ENCODE measurements at regions of chr22 and their contacts with region 1.

Region 1: DNA sequence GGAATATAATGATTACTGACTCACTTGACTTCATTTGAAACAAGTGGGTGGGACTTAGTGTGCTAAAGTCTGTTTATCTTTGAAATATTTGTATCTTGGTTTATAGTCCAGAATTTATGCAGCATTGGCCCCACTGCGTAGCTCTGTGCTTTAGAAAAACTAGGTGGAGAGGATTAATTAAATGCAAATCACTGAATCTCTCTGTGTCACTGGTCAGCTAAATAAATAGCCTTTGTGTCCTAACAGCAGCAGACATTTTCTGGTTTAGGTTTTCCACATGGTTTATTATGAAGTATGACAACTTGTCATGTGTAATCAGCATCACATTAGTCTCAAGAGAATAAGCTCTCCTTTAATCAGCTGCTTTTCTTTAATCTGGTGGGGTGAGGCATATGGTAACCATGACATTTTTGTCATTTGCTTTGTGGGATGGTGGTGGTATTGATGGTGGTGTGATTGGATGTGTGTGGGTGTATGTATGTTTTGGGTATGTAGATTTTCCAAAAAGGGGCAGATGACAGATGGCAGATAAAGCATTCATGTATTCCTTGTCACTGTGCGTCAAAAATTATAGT is 33.9 kb downstream of the BCL2L13 start:
- DNase-seq: no peak
- H3K4me3 Mint-ChIP-seq: no peak overlapping the region
- H3K27ac Mint-ChIP-seq: peak overlapping the region; percentile 72
- H3K4me1 Mint-ChIP-seq: peaks cover 19% of the 10 kb centered on the region
- H3K27me3 Mint-ChIP-seq: no peaks in the 10 kb centered on the region

Region 2: DNA sequence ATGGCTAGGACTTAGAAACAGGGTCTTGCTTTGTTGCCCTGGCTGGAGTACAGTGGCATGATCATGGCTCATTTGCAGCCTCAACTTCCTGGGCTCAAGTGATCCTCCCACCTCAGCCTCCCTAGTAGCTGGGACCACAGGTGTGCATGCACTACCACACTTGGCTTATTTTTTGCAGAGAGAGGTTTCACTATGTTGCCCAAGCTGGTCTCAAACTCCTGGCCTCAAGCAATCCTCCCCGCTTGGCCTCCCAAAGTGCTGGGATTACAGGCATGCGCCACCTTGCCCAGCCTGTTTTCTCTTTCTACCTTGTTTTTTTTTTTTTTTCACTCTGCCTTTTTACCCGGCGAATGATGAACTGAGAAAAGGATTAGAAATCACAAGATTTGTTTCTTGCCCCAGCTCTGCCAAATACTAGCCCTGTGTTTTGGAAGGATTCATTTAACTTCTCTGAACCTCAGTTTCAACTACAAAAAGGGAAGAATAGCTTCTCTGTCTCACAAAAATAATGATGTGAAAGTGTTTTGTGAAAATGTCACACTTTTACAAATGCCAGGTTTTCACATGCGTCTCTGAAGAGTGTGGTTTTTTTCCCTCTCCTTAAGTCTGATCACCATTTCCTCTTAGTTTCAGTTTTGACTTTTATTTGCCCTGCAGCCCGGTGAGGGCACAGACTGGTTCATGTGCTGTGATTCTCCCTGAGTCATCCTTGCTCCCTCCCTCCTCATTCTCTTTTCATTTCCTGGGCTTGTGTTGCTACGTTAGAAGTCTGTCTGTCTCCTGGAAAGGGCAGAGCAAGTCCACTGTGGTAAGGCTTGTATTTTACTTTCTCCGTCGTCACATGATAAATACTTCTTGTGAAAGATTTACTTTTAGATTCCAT is 33.8 kb after region 1 on chr22:
- intact Hi-C with region 1: loop called (anchors 5 kb)
- DNase-seq: peak; percentile 21
- H3K4me3 Mint-ChIP-seq: peak overlapping the region; percentile 61
- H3K27ac Mint-ChIP-seq: peak overlapping the region; percentile 89
- H3K4me1 Mint-ChIP-seq: peaks cover 17% of the 10 kb centered on the region
- H3K27me3 Mint-ChIP-seq: no peaks in the 10 kb centered on the region

Region 3: GRCh38 chr22:17773606-17774205 is 101.2 kb after region 1 on chr22:
- intact Hi-C with region 1: no loop called
- DNase-seq: peak; percentile 40
- H3K4me3 Mint-ChIP-seq: peak overlapping the region; percentile 77
- H3K27ac Mint-ChIP-seq: no peak overlapping the region
- H3K4me1 Mint-ChIP-seq: peaks cover 42% of the 10 kb centered on the region
- H3K27me3 Mint-ChIP-seq: peaks cover 29% of the 10 kb centered on the region

Measured in activated T-helper 2 cell treated with anti-CD3 and anti-CD28 coated beads, Interferon-gamma antibody, Interleukin-2, Interleukin-4, amounts not matched to agents 10 μg/mL and 5 μg/mL and 100 μg/mL, durations not matched to agents 14 hours and 24 hours and 36 hours (primary cell).